Activated CD4-positive, alpha-beta memory T cell treated with anti-CD3 and anti-CD28 coated beads for 36 hours (primary cell): ENCODE measurements at regions of chr2 and their contacts with region 1.

Region 1: GRCh38 chr2:96951093-96951654 is 35.2 kb downstream of the FAM178B start:
- DNase-seq: peak; percentile 83
- H3K4me3 Mint-ChIP-seq: peak overlapping the region; percentile 1
- H3K27ac Mint-ChIP-seq: peak overlapping the region; percentile 58
- H3K4me1 Mint-ChIP-seq: peaks cover 24% of the 10 kb centered on the region
- H3K27me3 Mint-ChIP-seq: no peaks in the 10 kb centered on the region

Region 2: DNA sequence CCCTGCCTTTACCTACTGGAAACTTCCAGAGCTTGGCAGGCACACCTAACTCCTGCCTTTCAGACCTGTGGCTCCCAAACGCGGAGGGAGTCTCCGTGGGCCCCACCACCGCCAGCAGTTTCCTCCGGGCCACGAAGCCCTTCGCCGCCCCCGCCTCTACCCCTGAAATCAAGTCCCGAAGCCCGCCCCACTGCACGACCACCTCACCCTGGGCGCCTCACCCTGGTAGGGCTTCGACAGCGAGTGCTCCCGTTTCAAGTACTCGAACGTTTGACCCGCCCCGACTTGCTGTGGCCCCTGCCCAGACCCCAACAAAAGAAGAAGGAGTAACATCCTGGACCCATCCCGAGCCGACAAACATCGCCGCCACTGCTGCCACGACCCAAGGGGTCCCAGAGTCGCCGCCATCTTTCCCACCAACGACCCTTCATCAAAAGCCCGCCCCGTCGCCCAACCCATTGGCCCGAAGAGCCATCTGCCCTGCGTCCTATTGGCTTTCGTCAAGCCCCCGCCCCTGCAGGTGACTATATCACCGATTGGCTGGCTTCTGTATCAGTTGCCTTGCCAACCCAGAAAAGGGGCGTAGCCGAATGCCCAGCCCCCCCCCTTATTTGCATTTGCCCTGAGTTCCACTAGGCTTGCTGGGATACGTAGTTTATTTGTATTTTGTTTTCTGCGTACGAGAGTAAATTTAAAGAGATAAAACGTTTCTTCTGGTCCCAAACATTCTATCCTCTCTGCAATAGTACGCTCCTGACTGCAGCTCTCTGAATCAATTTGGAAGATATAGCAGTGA is 211.3 kb before region 1 on chr2 and contains the start of gene LMAN2L:
- CTCF ChIA-PET with region 1: no interaction called
- POLR2A ChIA-PET with region 1: no interaction called
- intact Hi-C with region 1: no loop called
- DNase-seq: peak; percentile 99
- H3K4me3 Mint-ChIP-seq: peak within 1 kb of the TSS; percentile 92
- H3K27ac Mint-ChIP-seq: peak within 1 kb of the TSS; percentile 52
- H3K4me1 Mint-ChIP-seq: peaks cover 35% of the 10 kb centered on the region
- H3K27me3 Mint-ChIP-seq: no peaks in the 10 kb centered on the region
- total RNA-seq, gene LMAN2L: 5.7 to 6.1 TPM

Region 3: GRCh38 chr2:96816128-96816835 is 134.9 kb before region 1 on chr2 and contains the start of gene CNNM3:
- CTCF ChIA-PET with region 1: interaction called, 5 read pairs
- POLR2A ChIA-PET with region 1: no interaction called
- intact Hi-C with region 1: loop called (anchors 5 kb)
- DNase-seq: peak; percentile 97
- H3K4me3 Mint-ChIP-seq: peak within 1 kb of the TSS; percentile 82
- H3K27ac Mint-ChIP-seq: peak within 1 kb of the TSS; percentile 77
- H3K4me1 Mint-ChIP-seq: peaks cover 60% of the 10 kb centered on the region
- H3K27me3 Mint-ChIP-seq: no peaks in the 10 kb centered on the region
- total RNA-seq, gene CNNM3: 16.3 to 22.2 TPM

Region 4: DNA sequence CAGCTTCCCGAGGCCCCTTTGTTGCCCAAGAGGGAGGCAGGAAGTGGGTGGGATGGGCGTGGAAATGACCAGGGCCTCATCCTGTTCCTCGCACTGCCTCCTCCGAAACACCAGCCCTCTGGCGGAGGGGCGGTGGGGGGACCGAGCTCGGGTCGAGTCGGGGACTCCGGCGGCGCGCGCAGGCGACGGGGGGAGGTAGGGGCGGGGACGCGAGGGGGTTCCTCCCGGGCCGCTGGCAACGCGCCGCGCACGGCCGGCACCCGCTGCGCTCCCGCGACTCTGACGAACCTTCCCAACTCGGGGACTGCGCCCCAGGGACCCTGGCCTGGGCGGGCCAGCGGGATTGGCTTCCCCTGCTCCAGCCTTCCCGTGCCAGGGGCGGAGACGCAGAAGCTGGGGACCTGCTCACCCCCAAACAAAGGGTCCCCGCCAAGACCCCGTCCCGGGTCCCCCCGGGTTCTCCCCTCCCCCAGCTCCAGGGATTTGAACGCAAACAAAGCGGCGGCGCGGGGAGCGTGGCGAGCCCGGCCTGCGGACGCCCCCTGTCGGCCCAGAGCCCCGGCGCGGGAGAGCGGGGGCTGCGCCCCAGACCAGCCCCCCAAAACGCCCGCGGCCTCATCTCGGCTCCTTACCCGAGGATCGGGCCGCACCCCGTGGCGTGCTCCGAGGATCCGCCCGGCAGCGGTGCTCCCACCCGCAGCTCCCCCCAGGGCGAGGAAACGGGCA is 82.5 kb before region 1 on chr2:
- CTCF ChIA-PET with region 1: interaction called, 192 read pairs
- POLR2A ChIA-PET with region 1: no interaction called
- intact Hi-C with region 1: no loop called
- DNase-seq: peak; percentile 81
- H3K4me3 Mint-ChIP-seq: peak overlapping the region; percentile 79
- H3K27ac Mint-ChIP-seq: peak overlapping the region; percentile 76
- H3K4me1 Mint-ChIP-seq: peaks cover 35% of the 10 kb centered on the region
- H3K27me3 Mint-ChIP-seq: peaks cover 2% of the 10 kb centered on the region

Region 5: GRCh38 chr2:96940001-96940615 is 11.1 kb before region 1 on chr2:
- CTCF ChIA-PET with region 1: interaction called, 36 read pairs
- POLR2A ChIA-PET with region 1: no interaction called
- intact Hi-C with region 1: no loop called
- DNase-seq: no peak
- H3K4me3 Mint-ChIP-seq: no peak overlapping the region
- H3K27ac Mint-ChIP-seq: no peak overlapping the region
- H3K4me1 Mint-ChIP-seq: peaks cover 23% of the 10 kb centered on the region
- H3K27me3 Mint-ChIP-seq: no peaks in the 10 kb centered on the region